ENCODE measurements at regions of chr1 and their contacts with region 1.

Region 1: GRCh38 chr1:93635614-93636543 is 45.8 kb downstream of the BCAR3 start:
- DNase-seq: no peak
- ATAC-seq: no peak
- H3K4me3 ChIP-seq: no peak overlapping the region
- H3K27ac ChIP-seq: peak overlapping the region; percentile 44; the same call in 1 of the 2 replicates
- H3K4me1 ChIP-seq: peaks cover 13% of the 10 kb centered on the region; the same call in 1 of the 2 replicates
- H3K27me3 ChIP-seq: no peaks in the 10 kb centered on the region
- CTCF ChIP-seq: no peak

Region 2: GRCh38 chr1:93661829-93662474 is 26.1 kb after region 1 on chr1:
- CTCF ChIA-PET with region 1: no interaction called
- POLR2A ChIA-PET with region 1: no interaction called
- in situ Hi-C with region 1: no loop called
- intact Hi-C with region 1: no loop called
- DNase-seq: no peak
- ATAC-seq: peak; percentile 32; the same call in 1 of the 2 replicates
- H3K4me3 ChIP-seq: no peak overlapping the region
- H3K27ac ChIP-seq: peak overlapping the region; percentile 79
- H3K4me1 ChIP-seq: peaks cover 49% of the 10 kb centered on the region
- H3K27me3 ChIP-seq: no peaks in the 10 kb centered on the region
- CTCF ChIP-seq: no peak

Region 3: GRCh38 chr1:93680757-93681550 is 45.1 kb after region 1 on chr1:
- CTCF ChIA-PET with region 1: no interaction called
- POLR2A ChIA-PET with region 1: no interaction called
- in situ Hi-C with region 1: no loop called
- intact Hi-C with region 1: no loop called
- DNase-seq: no peak
- ATAC-seq: peak; percentile 90
- H3K4me3 ChIP-seq: peak overlapping the region; percentile 68 to 72
- H3K27ac ChIP-seq: peak overlapping the region; percentile 89
- H3K4me1 ChIP-seq: peaks cover 28% of the 10 kb centered on the region
- H3K27me3 ChIP-seq: no peaks in the 10 kb centered on the region
- CTCF ChIP-seq: peak; percentile 73

Region 4: GRCh38 chr1:93692983-93693591 is 57.2 kb after region 1 on chr1:
- CTCF ChIA-PET with region 1: no interaction called
- POLR2A ChIA-PET with region 1: interaction called, 11 read pairs
- in situ Hi-C with region 1: no loop called
- intact Hi-C with region 1: no loop called
- DNase-seq: peak; percentile 87
- ATAC-seq: peak; percentile 86
- H3K4me3 ChIP-seq: peak overlapping the region in 1 of 2 experiments; percentile 27; a peak in 2 of 4 replicates
- H3K27ac ChIP-seq: peak overlapping the region; percentile 80
- H3K4me1 ChIP-seq: peaks cover 27% of the 10 kb centered on the region
- H3K27me3 ChIP-seq: no peaks in the 10 kb centered on the region
- CTCF ChIP-seq: no peak

Measured in Panc1 (cell line).